Endothelial cell of umbilical vein (primary cell): ENCODE measurements at regions of chr20 and their contacts with region 1.

Region 1: GRCh38 chr20:38337561-38338140 is 8.6 kb upstream of the LBP start:
- DNase-seq: no peak
- H3K4me3 ChIP-seq: no peak overlapping the region
- H3K27ac ChIP-seq: no peak overlapping the region
- H3K4me1 ChIP-seq: no peaks in the 10 kb centered on the region
- H3K27me3 ChIP-seq: no peaks in the 10 kb centered on the region
- CTCF ChIP-seq: peak; percentile 32 to 42
- POLR2A ChIP-seq: no peak

Region 2: GRCh38 chr20:38406476-38406875 is 68.8 kb after region 1 on chr20:
- CTCF ChIA-PET with region 1: interaction called, 51 read pairs
- POLR2A ChIA-PET with region 1: no interaction called
- dilution Hi-C with region 1: no loop called
- intact Hi-C with region 1: loop called (anchors 1 kb)
- DNase-seq: no peak
- H3K4me3 ChIP-seq: no peak overlapping the region
- H3K27ac ChIP-seq: no peak overlapping the region
- H3K4me1 ChIP-seq: no peaks in the 10 kb centered on the region
- H3K27me3 ChIP-seq: no peaks in the 10 kb centered on the region
- CTCF ChIP-seq: no peak
- POLR2A ChIP-seq: no peak